Cardiac septum (tissue), 1 donor: ENCODE measurements at regions of chr4 and their contacts with region 1.

Region 1: GRCh38 chr4:121800961-121801714 is at the start of gene EXOSC9:
- DNase-seq: peak; percentile 96
- total RNA-seq, gene EXOSC9: 13.5 TPM

Region 2: DNA sequence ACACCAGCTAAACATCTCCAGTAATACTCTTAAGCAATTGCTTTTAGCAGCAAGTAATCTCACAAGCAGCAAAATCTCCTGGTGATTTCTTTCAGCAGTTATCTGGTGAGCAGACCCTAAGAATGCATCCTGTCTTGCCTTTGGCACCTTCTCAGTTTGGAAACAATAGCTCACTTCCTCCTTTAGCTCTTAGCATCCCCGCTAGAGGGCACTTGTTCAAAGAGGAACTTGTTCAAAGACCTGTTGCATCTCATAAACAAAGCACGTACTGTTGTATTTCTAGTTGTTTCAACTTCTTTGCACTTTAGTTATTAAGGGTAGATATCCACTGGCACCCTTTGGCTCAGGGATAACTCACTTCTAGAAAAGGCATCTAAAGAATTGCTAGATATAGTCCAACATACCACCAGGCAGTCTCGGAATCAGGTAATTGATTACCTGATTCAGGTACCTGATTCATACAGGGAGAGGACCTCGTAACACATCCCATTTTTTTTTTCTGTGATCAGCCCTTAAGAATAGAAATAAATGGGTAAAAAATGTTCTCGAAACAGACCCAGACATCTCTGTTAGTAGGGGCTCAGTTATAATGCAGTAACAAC is 338.4 kb before region 1 on chr4:
- intact Hi-C with region 1: no loop called
- DNase-seq: no peak

Region 3: DNA sequence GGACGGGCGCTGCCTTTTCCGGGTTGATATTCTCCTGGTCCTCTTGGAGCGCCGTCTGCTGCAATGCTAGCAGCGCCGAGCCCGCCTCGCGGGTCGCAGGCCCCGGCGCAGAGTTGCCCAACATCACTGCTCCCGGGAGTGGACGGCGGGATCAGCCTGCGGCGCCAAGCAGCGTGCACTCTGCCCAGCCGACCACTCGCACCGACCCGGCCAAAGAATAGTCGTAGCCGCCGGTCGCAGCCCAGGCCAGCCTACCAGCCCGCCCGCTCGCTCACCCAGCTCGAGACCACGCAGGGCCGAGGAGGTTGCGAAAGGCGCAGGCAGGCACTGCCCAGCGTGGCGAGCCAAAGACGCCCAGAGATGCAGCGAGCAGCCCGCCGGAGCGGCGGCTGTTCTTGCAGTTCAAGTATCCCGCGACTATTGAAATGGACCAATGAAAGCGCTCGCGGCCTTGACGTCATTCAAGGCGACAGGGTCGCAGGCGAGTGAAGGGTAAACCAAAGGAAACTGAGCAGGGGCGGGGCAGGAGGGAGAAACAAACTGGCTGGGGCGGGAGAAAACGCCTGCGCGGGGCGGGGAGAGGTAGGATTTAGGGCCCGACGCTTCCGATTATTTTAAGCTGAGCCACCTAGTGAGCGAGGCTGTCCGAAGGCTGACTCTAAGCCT is 22.5 kb after region 1 on chr4 and contains the start of gene CCNA2:
- intact Hi-C with region 1: loop called (anchors 1 kb)
- DNase-seq: peak; percentile 97
- total RNA-seq, gene CCNA2: 0.38 TPM

Region 4: DNA sequence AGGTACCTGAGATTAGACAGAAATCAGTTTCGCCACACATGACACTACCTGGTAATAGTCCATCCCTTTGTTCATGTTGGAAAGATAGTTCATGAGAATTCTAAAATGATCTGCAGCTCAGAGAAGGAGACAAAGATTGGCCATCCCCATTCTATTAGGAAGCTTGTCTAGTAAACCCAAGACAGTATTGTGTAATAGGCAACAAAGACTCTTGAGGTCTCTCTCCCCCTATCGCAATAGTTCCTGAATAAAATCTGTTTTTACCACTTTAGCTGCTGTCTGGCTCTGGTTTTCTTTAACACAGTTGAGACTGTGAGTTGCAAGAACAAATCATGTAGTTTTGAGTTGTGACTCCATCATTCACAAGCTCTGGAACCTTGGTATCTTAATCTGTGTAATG is 84.0 kb after region 1 on chr4:
- intact Hi-C with region 1: no loop called
- DNase-seq: no peak

Region 5: DNA sequence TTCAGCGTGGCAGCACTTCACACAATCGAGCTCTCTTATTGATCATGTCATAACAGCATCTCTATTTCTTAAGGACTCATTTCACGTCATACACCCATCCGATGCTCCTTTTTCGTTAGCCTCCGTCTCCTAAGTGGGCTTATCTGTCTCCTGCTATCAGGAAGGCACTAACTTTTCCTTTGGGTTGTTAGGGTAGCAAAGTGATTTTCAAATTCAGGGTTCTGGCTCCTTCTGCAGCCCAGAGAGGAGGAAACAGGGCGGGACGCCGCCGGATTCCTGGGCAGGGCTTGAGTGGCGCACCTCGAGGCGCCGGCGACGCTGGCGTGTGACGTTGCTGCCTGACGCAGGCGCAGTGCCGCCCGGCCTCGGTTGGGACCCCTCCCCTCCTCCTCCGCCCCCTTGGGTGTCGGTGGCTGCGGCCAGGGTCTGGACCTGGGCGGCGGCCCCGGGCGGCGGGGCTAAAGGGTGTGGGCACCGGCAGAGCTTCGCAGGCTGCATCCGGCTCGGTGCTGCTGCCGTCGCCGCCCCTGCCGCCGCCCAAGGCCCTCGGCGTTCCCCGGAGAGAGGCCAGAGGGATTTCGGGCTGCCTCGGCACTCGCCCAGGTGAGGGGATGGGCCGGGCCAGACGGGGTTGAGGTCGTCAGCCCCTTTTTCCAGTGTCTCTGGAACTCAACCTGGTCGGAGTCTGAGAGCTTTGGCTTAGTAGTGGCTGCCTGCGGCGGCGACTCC is 351.0 kb after region 1 on chr4 and contains the start of gene BLTP1:
- intact Hi-C with region 1: no loop called
- DNase-seq: peak; percentile 97
- total RNA-seq, gene BLTP1: 38.4 TPM